Activated CD8-positive, alpha-beta T cell treated with anti-CD3 and anti-CD28 coated beads, Interleukin-2, amount 10 ng/mL, durations not matched to agents 7 days and 5 days (primary cell): ENCODE measurements at regions of chr20 and their contacts with region 1.

Region 1: DNA sequence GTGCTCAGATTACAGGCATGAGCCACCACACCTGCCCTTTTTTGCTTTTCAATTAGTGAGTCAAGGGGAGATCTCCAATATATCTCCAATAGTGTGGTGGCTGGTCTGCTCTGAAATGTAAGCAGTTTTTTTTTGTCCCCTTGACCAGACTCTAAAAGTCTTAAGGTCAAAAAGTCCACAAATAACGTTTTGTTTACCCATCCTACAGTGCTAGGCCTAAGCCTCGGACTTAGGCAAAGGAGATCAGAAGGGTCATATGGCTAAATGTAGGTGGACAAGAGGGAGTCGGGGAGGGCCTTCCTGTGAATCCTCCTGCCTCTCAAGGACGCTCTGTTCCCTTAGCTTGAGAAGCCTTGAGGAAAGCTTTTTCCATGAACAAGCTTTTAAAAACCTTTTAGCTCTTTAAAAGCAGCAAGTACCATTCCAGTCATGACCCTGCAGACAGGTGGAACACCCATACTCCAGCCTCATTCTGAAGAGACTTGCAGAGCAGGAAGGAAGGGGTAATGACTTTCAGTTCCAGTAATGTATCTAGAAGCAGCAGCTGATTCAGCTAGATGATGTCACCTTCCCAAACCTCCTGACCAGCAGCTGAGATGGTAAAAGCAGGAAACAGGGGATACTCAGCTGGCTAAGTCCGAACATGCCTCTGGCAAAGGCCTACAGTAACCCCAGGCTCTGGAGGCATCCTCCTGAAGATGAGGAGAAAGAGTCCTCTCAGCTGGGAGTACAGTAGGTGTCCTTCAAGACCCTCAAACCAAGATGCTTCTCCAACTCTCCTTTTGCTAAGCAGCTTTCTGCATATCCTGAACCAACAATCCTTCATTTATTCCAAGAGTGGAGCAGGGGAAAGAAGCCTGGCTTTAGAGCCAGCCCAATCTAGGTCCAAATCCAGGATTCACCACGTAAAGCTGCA is 23.6 kb downstream of the BCL2L1 start:
- DNase-seq: peak; percentile 45
- ATAC-seq: peak; percentile 76
- H3K4me3 Mint-ChIP-seq: peak overlapping the region; percentile 27
- H3K27ac Mint-ChIP-seq: peak overlapping the region; percentile 84
- H3K4me1 Mint-ChIP-seq: peaks cover 65% of the 10 kb centered on the region
- H3K27me3 Mint-ChIP-seq: no peaks in the 10 kb centered on the region

Region 2: DNA sequence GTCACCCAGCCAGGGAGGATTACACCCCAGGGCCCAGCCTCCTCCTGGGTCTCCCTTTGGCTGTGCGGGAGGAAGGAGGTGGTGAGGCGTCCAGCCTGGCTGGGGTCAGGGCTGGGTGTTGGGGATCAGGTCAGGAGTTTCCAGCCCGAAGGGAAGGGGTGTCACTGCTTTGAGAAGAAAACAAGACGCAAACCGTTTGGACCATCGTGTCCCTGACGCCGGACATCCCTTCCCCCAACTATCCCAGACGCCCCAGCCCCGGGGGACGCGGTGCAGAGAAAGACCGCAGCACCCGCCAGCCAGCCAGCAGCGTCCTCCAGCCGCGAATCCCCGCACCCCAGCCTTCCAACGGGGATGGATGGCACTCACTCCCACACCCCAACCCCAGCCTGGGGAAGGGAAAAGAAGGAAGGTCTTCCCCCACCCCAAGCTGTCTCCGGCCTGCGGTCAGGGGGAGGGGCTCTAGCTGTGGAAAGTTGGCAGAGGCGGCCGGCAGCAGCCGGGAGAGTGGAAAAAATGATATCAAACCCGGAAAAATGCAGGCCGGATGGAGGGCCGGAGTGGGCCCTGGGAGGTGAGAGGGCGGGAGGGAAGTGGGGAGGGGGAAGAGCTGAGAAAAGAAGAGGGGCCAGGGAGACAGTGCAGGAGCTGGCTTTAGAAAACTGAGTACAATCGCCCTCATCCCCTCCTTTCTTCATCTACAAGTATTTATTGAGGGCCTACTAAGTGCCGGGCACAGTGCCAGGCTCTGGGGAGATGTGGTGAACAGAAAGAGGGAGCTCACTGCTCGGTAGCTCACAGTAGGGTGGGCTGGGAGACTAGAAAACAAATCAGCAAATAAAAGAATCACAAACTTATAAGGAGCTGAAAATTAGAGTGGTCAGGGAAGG is 213.4 kb before region 1 on chr20:
- CTCF ChIA-PET with region 1: no interaction called
- POLR2A ChIA-PET with region 1: no interaction called
- DNase-seq: no peak
- ATAC-seq: no peak
- H3K4me3 Mint-ChIP-seq: no peak overlapping the region
- H3K27ac Mint-ChIP-seq: no peak overlapping the region
- H3K4me1 Mint-ChIP-seq: no peaks in the 10 kb centered on the region
- H3K27me3 Mint-ChIP-seq: peaks cover 31% of the 10 kb centered on the region

Region 3: DNA sequence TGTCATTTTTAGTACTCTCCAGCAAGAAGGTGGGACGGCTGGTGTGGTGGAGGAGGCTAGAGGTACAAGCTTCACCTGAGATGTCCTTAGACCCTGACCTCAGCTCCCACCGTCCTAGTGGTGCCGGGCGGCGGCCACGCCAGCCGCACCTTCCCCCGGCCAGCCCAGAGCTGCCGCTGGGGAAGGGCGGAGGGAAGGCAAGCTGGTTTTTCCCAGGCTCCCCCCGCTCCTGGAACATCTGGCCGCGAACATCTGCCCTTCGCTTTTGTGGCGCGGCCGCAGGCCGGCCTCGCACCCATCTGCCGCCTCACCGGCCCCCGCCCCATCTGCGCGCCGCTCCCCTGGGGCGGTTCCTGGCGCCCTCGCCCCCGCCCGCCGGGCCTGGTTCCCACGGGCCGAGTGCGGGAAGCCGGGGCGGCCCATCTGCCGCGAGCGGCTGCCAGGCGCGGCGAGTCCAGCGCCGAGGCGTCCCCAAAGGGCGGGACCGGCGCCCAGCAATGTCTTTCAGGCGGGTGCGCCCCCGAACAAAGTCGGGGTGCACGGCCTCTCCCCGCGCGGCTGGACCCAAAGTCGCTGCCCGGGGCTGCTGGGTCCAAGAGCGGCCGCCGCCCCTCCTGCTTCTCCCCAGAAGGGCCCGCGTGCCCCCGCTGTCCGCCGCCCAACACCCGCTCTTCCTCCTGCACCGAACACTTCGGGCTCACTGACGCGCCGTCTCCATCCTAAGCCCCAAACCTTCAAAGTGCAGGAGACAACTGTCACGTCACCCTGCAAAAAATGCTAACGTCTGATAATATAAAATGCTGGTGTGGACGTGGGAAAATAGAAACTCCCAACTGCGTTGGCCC is 111.3 kb before region 1 on chr20:
- CTCF ChIA-PET with region 1: no interaction called
- POLR2A ChIA-PET with region 1: no interaction called
- DNase-seq: no peak
- ATAC-seq: peak; percentile 81
- H3K4me3 Mint-ChIP-seq: peak overlapping the region; percentile 58
- H3K27ac Mint-ChIP-seq: no peak overlapping the region
- H3K4me1 Mint-ChIP-seq: peaks cover 5% of the 10 kb centered on the region
- H3K27me3 Mint-ChIP-seq: peaks cover 27% of the 10 kb centered on the region

Region 4: GRCh38 chr20:31674895-31675827 is 23.9 kb before region 1 on chr20:
- CTCF ChIA-PET with region 1: interaction called, 3 read pairs
- POLR2A ChIA-PET with region 1: interaction called, 32 read pairs
- DNase-seq: peak; percentile 84
- ATAC-seq: peak; percentile 63
- H3K4me3 Mint-ChIP-seq: peak overlapping the region; percentile 89
- H3K27ac Mint-ChIP-seq: peak overlapping the region; percentile 98
- H3K4me1 Mint-ChIP-seq: peaks cover 95% of the 10 kb centered on the region
- H3K27me3 Mint-ChIP-seq: no peaks in the 10 kb centered on the region

Region 5: GRCh38 chr20:31684153-31685015 is 14.7 kb before region 1 on chr20:
- CTCF ChIA-PET with region 1: interaction called, 12 read pairs
- POLR2A ChIA-PET with region 1: interaction called, 22 read pairs
- DNase-seq: no peak
- ATAC-seq: peak; percentile 67
- H3K4me3 Mint-ChIP-seq: no peak overlapping the region
- H3K27ac Mint-ChIP-seq: peak overlapping the region; percentile 85
- H3K4me1 Mint-ChIP-seq: peaks cover 82% of the 10 kb centered on the region
- H3K27me3 Mint-ChIP-seq: no peaks in the 10 kb centered on the region

Region 6: DNA sequence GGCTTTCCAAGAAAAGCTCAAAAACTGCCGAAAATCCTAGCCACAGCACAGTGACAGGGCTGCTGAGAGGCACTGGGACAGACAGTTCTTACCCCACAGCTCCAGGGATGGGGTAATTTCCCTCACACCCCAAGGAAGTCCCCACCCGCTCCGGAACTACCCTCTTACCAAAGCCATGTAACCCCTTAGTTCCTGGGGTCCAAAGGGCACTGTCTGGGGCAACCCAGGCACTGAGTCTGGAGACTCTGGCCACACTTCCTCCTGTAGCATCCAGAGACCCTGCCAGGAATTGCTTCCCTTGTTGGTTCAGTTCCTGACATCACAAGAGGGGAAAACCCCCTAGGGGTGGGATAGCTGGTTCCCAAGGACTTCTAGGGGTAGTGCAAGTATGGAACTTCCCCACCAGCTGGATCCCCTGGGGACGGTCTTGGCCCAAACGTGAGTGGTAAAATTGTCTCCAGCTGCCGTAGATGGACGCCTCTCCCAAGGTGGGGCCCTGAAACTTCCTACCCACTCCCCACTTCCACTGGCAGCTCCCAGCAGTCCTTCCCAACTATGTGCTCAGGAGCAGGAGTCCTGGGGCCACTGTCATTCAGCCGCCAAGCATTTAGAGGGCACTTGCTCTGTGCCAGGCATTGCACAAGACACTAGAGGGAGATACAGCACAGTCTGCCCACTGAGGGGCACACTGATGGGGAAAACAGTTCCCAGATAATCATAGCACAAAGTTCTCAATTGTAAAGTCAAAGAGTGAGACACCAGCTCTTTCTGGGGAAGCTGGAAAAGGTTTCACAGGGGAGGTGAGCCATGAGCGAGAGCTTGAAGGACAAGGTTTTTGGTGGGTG is 335.7 kb after region 1 on chr20:
- CTCF ChIA-PET with region 1: no interaction called
- POLR2A ChIA-PET with region 1: no interaction called
- DNase-seq: no peak
- ATAC-seq: no peak
- H3K4me3 Mint-ChIP-seq: no peak overlapping the region
- H3K27ac Mint-ChIP-seq: no peak overlapping the region
- H3K4me1 Mint-ChIP-seq: peaks cover 2% of the 10 kb centered on the region
- H3K27me3 Mint-ChIP-seq: peaks cover 47% of the 10 kb centered on the region

Region 7: DNA sequence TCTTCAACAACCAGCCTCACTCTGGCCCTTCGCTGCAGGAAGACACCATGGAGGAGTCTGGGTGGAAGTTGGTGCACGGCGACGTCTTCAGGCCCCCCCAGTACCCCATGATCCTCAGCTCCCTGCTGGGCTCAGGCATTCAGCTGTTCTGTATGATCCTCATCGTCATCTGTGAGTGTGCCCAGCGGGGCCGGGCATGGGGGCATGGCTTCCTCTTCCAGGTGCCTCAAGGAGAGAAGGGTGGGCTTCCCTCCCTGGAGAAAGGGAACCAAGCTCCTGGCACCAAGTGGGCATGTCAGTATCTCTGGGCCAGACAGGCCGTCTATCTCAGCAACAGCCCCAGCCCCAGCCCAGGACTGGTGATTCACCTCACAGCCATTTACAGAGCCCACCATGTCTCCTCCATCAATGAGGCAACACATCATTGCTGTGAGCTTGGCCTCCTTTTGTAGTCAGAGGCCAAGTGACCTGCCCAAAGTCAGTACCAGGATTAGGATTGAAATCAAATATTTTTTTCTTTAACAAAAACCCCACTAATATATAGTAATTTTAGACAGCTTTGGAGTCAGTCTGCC is 450.6 kb after region 1 on chr20:
- CTCF ChIA-PET with region 1: no interaction called
- POLR2A ChIA-PET with region 1: no interaction called
- DNase-seq: no peak
- ATAC-seq: no peak
- H3K4me3 Mint-ChIP-seq: no peak overlapping the region
- H3K27ac Mint-ChIP-seq: no peak overlapping the region
- H3K4me1 Mint-ChIP-seq: no peaks in the 10 kb centered on the region
- H3K27me3 Mint-ChIP-seq: no peaks in the 10 kb centered on the region